WTC11 (cell line): ENCODE measurements at regions of chr13 and their contacts with region 1.

Region 1: DNA sequence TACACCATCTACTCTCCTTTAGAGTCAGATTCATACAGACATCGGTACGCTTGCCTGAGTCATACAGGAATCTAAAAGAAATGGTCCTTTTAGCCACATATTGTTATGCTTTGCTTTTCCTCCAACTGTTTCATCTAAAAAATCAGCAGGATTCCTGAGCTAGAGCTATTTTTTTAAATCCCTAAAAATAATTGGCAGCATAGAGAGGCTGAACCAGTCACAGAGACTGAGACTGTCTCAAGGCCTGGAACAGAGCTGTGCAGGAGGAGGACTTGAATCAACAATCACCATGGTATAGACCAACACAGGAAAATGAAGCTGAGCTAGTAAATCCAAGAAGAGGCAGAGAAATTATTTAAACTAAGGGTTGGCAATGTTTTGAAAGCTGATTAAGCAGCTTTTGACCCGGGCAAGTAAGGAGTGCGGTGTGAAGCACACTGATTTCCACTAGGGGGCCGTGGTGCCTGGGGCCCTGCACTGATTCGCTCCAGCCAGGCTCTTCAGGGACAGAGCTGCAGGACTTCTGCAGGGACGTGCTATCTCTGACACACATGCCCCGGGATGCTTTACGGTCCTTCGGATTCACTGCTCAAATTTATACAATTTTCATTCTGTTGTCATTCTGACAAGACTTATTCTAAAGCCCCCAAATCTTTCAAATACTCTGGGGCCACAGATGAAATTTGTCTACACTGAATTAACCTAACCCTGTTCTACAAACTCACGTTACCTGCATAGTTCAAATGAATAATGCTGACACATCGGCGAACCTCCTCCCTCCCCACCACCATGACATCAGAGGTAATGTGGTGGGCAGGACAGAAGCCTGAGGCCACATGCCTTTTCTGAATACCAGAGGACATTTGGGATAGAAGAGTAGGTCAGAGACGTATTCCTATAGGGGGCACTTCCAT is 87.6 kb upstream of the SLC15A1 start:
- DNase-seq: peak; percentile 78
- ATAC-seq: peak; percentile 99
- H3K4me3 Mint-ChIP-seq: no peak overlapping the region
- H3K27ac Mint-ChIP-seq: peak overlapping the region; percentile 60; the same call in 1 of the 2 replicates
- H3K4me1 Mint-ChIP-seq: peaks cover 13% of the 10 kb centered on the region
- H3K27me3 Mint-ChIP-seq: no peaks in the 10 kb centered on the region
- CTCF ChIP-seq: peak; percentile 87

Region 2: GRCh38 chr13:98794498-98794897 is 45.6 kb before region 1 on chr13:
- CTCF ChIA-PET with region 1: interaction called, 12 read pairs
- POLR2A ChIA-PET with region 1: no interaction called
- DNase-seq: no peak
- ATAC-seq: peak; percentile 77
- H3K4me3 Mint-ChIP-seq: no peak overlapping the region
- H3K27ac Mint-ChIP-seq: no peak overlapping the region
- H3K4me1 Mint-ChIP-seq: no peaks in the 10 kb centered on the region
- H3K27me3 Mint-ChIP-seq: no peaks in the 10 kb centered on the region
- CTCF ChIP-seq: no peak

Region 3: DNA sequence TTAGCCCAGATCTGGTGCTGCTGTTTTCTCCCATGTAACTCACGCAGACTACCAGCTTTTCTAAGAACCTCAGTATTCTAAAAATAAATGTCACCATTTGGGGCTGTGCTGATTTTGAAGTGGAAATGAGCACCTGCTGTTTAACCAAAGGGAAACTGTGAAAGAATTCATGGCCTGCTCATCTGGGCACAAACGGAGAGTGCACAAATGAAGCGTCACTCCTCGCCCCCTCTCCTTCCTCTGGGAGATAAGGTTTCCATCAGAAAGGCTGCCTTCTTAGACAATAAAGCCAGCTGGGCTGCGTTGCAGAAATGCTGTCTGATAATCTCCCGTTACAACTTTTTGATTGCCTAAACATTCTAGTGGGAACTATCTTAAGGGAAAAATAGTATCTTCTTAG is 14.0 kb before region 1 on chr13:
- CTCF ChIA-PET with region 1: interaction called, 40 read pairs
- POLR2A ChIA-PET with region 1: no interaction called
- DNase-seq: no peak
- ATAC-seq: no peak
- H3K4me3 Mint-ChIP-seq: no peak overlapping the region
- H3K27ac Mint-ChIP-seq: no peak overlapping the region
- H3K4me1 Mint-ChIP-seq: peaks cover 35% of the 10 kb centered on the region
- H3K27me3 Mint-ChIP-seq: no peaks in the 10 kb centered on the region
- CTCF ChIP-seq: no peak

Region 4: GRCh38 chr13:98875146-98875729 is 35.1 kb after region 1 on chr13:
- CTCF ChIA-PET with region 1: interaction called, 10 read pairs
- POLR2A ChIA-PET with region 1: no interaction called
- DNase-seq: no peak
- ATAC-seq: peak; percentile 87
- H3K4me3 Mint-ChIP-seq: peak overlapping the region; percentile 8; the same call in 1 of the 2 replicates
- H3K27ac Mint-ChIP-seq: peak overlapping the region; percentile 92
- H3K4me1 Mint-ChIP-seq: peaks cover 34% of the 10 kb centered on the region
- H3K27me3 Mint-ChIP-seq: no peaks in the 10 kb centered on the region
- CTCF ChIP-seq: no peak

Region 5: DNA sequence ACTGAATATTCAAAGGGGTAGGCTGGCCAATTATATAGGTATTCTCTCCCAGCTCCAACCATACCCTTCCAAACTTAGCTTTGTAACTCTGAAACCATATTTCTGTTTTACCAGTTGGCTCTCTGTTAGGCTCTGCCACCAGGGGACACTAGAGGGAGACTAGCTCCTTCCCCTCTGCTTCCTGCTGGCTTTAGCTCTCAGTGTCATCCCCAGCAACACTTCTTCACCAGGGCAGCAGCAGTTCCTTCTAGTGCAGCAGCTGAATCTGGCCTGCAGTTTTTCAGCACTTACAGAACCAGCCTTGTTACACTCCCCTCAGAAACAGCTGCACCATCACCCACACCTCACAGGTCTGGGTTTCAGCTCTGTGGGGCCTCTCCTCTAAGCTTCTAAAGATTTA is 188.8 kb after region 1 on chr13:
- CTCF ChIA-PET with region 1: interaction called, 11 read pairs
- POLR2A ChIA-PET with region 1: no interaction called
- DNase-seq: peak; percentile 59
- ATAC-seq: peak; percentile 94
- H3K4me3 Mint-ChIP-seq: no peak overlapping the region
- H3K27ac Mint-ChIP-seq: no peak overlapping the region
- H3K4me1 Mint-ChIP-seq: peaks cover 2% of the 10 kb centered on the region; the same call in 1 of the 2 replicates
- H3K27me3 Mint-ChIP-seq: no peaks in the 10 kb centered on the region
- CTCF ChIP-seq: peak; percentile 33

Region 6: DNA sequence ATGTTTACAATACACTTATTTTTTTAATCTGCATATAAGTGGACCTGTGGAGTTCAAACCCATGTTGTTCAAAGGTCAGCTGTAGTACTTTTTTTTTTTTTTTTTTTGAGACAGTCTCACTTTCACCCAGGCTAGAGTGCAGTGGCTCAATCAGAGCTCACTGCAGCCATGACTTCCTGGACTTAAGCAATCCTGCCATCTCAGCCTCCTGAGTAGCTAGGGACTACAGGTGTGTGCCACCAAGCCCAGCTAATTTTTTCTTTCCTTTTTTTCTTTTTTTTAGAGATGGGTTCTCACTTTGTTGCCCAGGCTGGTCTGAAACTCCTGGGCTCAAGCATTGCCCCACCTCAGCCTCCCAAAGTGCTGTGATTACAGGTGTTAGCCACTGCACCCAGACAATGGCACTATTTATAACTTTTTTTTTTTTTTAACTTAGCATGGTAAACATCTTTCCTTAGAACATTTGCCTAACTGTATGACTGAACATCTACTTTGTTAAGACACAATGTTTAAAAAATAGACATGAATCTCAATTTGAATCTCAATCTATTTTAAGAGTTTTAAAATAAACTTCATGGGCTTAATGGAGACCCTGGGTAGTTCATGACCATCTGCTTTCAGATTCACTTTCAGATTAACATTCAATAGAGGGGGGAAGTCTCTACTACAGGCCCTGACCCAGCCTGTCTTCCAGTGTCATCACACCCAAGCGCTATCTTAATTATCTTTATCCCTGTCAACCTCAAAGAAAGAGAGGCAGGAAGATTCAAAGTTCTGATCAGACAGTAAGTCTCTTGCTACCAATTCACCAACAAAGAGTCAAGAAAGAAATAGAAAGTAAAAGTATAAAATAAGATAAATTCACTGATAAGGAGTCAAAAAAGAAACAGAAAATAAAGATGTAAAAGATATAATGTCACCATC is 235.4 kb after region 1 on chr13:
- CTCF ChIA-PET with region 1: no interaction called
- POLR2A ChIA-PET with region 1: no interaction called
- DNase-seq: no peak
- ATAC-seq: no peak
- H3K4me3 Mint-ChIP-seq: no peak overlapping the region
- H3K27ac Mint-ChIP-seq: no peak overlapping the region
- H3K4me1 Mint-ChIP-seq: no peaks in the 10 kb centered on the region
- H3K27me3 Mint-ChIP-seq: no peaks in the 10 kb centered on the region
- CTCF ChIP-seq: no peak